PC-9 (cell line): ENCODE measurements at regions of chr10 and their contacts with region 1.

Region 1: GRCh38 chr10:43026011-43026973 is 50.6 kb upstream of the RET start:
- DNase-seq: peak in 1 of 2 experiments; percentile 70
- H3K4me3 ChIP-seq: no peak overlapping the region
- H3K27ac ChIP-seq: no peak overlapping the region
- H3K4me1 ChIP-seq: no peaks in the 10 kb centered on the region
- H3K27me3 ChIP-seq: no peaks in the 10 kb centered on the region
- CTCF ChIP-seq: no peak

Region 2: DNA sequence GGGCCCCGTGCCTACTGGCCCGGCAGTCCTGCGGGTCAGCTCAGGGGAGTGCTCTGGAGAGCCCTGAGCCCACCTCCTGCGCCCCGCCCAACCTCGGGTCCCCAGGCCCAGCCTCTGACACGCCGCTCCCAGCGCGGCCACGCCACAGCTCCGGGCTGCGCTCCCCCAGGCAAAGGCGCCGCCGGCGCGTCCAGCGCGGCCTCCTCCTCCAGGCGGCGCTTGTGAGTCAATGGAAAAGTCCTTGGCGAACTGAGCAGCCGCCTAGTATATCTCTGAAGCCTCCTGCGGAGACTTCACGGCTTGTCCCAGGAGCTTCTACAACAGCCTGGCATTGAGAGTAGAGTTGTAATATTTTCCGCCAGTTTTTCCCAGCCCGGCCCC is 273.2 kb before region 1 on chr10:
- CTCF ChIA-PET with region 1: no interaction called
- POLR2A ChIA-PET with region 1: no interaction called
- intact Hi-C with region 1: no loop called
- DNase-seq: peak in 1 of 2 experiments; percentile 68
- H3K4me3 ChIP-seq: no peak overlapping the region
- H3K27ac ChIP-seq: no peak overlapping the region
- H3K4me1 ChIP-seq: no peaks in the 10 kb centered on the region
- H3K27me3 ChIP-seq: peaks cover 31% of the 10 kb centered on the region
- CTCF ChIP-seq: no peak; the same call in 1 of the 2 replicates

Region 3: DNA sequence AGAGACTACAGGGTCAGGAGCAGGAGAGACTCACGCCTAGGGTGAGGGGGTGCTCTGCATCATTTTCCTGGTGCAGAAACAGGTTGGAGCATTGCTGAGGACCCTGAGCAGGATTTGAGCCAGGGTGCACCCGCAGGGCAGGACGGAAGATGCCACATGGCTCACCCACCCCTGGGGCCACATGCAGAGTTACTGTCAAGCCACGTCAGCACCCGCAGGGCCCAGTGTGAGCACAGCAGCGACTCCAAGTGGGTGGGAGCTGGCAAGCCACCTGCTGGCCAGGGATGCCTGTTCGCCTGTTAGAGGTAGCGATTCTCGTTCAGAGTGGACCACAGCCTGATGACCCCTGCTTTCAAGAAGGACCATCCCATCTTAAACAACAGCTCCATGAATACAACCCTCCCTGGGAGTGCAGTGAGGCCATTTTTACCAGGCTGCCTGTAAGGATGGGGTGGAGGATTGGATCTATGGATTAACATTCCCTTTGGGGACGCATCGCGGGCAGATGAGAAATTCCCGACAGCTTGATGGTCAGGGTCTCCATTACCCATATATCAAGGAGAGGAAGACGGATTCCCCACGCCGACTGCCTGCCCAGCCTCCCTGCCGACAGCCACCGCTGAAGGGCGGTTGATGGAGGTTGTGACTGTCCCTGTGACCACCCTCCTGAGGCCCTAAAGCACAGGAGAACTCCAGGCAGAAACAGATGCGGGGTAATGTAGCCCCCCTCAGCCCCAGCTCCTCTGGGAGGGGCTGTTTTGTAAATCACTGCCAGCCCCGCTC is 50.5 kb before region 1 on chr10:
- CTCF ChIA-PET with region 1: no interaction called
- POLR2A ChIA-PET with region 1: no interaction called
- intact Hi-C with region 1: no loop called
- DNase-seq: peak; percentile 16 to 44
- H3K4me3 ChIP-seq: no peak overlapping the region
- H3K27ac ChIP-seq: no peak overlapping the region
- H3K4me1 ChIP-seq: no peaks in the 10 kb centered on the region
- H3K27me3 ChIP-seq: no peaks in the 10 kb centered on the region
- CTCF ChIP-seq: peak; percentile 27; the same call in 1 of the 2 replicates

Region 4: DNA sequence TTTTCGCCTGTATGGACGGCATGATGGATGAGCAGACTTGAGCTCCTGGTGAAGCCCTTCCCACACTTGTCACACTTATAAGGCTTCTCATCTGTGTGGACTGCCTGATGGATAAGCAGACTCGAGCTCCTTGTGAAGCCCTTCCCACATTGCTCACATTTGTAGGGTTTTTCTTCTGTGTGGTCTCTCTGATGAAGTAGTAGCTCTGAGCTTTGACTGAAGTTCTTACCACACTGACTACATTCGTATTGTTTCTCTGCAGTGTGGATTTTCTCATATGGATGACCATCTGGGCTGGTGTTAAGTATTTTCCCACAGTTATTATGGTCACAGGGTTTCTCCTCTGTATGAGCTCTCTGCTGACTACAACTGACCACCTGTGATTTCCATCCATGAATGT is 530.9 kb after region 1 on chr10:
- CTCF ChIA-PET with region 1: no interaction called
- POLR2A ChIA-PET with region 1: interaction called, 12 read pairs
- intact Hi-C with region 1: no loop called
- DNase-seq: no peak
- H3K4me3 ChIP-seq: no peak overlapping the region
- H3K27ac ChIP-seq: no peak overlapping the region
- H3K4me1 ChIP-seq: no peaks in the 10 kb centered on the region
- H3K27me3 ChIP-seq: no peaks in the 10 kb centered on the region
- CTCF ChIP-seq: no peak